Endothelial cell of umbilical vein (primary cell): ENCODE measurements at regions of chr1 and their contacts with region 1.

Region 1: GRCh38 chr1:119275145-119276134 is 93.1 kb upstream of the HAO2 start:
- DNase-seq: peak; percentile 63
- H3K4me3 ChIP-seq: no peak overlapping the region
- H3K27ac ChIP-seq: no peak overlapping the region
- H3K4me1 ChIP-seq: peaks cover 16% of the 10 kb centered on the region
- H3K27me3 ChIP-seq: peaks cover 9 to 18% of the 10 kb centered on the region in 2 experiments
- CTCF ChIP-seq: peak; percentile 84 to 87
- POLR2A ChIP-seq: no peak

Region 2: GRCh38 chr1:118788463-118788862 is 487.0 kb before region 1 on chr1:
- CTCF ChIA-PET with region 1: no interaction called
- POLR2A ChIA-PET with region 1: no interaction called
- dilution Hi-C with region 1: no loop called
- intact Hi-C with region 1: no loop called
- DNase-seq: no peak
- H3K4me3 ChIP-seq: no peak overlapping the region
- H3K27ac ChIP-seq: no peak overlapping the region
- H3K4me1 ChIP-seq: no peaks in the 10 kb centered on the region
- H3K27me3 ChIP-seq: no peaks in the 10 kb centered on the region
- CTCF ChIP-seq: no peak
- POLR2A ChIP-seq: no peak

Region 3: DNA sequence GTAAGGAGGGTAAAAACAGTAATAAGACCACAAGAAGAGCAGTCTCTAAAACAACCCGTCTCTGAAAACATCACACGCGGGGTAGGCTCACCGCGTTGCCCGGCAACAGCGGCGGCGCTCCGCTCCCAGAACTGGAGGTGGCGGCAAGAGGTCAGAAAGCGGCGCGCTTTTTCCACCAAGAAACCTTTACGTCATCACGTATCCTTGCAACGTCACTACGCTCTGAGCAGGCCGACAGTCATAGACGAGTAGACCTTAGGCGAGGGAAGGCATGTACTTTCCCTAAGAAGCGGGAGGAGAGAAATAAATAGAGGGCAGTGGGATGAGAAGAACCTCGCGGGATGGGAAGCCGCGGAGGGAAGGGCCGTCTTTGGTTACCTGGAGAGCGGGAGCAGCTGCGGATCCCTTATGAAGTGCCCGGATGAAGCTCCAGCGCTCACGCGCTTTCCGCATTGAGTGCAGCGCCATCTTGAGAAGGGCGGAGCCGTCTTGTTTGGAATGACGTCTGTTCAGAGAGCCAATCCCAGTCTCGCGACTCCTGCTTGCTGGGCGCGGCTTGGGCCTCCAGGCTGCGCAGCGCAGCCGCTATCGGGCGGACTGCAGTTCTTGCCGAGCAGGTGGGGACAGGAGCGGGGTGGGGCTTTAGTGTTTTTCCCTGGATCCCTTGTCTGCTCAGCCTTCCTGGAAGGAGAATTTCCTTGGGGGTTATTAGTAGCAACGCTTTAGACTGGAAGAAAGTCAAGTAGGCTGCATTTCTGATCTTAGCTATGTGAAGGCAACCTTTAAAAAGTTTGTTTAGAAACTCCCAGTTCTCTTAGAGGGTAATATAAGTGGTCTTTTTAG is 135.0 kb before region 1 on chr1 and contains the start of gene WARS2:
- CTCF ChIA-PET with region 1: interaction called, 7 read pairs
- POLR2A ChIA-PET with region 1: no interaction called
- dilution Hi-C with region 1: no loop called
- intact Hi-C with region 1: loop called (anchors 2 kb)
- DNase-seq: peak; percentile 97
- H3K4me3 ChIP-seq: peak within 1 kb of the TSS; percentile 14 to 71 (median 56)
- H3K27ac ChIP-seq: peak within 1 kb of the TSS; percentile 89
- H3K4me1 ChIP-seq: peaks cover 13% of the 10 kb centered on the region
- H3K27me3 ChIP-seq: no peaks in the 10 kb centered on the region
- CTCF ChIP-seq: no peak
- POLR2A ChIP-seq: peak; percentile 92
- total RNA-seq, gene WARS2: 11.8 and 13.1 TPM in 2 replicates

Region 4: GRCh38 chr1:119254067-119254720 is 21.2 kb before region 1 on chr1:
- CTCF ChIA-PET with region 1: interaction called, 10 read pairs
- POLR2A ChIA-PET with region 1: no interaction called
- dilution Hi-C with region 1: no loop called
- intact Hi-C with region 1: no loop called
- DNase-seq: no peak
- H3K4me3 ChIP-seq: no peak overlapping the region
- H3K27ac ChIP-seq: no peak overlapping the region
- H3K4me1 ChIP-seq: no peaks in the 10 kb centered on the region
- H3K27me3 ChIP-seq: no peaks in the 10 kb centered on the region
- CTCF ChIP-seq: no peak
- POLR2A ChIP-seq: no peak

Region 5: GRCh38 chr1:119298687-119299303 is 23.4 kb after region 1 on chr1:
- CTCF ChIA-PET with region 1: interaction called, 12 read pairs
- POLR2A ChIA-PET with region 1: no interaction called
- dilution Hi-C with region 1: no loop called
- intact Hi-C with region 1: no loop called
- DNase-seq: no peak
- H3K4me3 ChIP-seq: no peak overlapping the region
- H3K27ac ChIP-seq: no peak overlapping the region
- H3K4me1 ChIP-seq: no peaks in the 10 kb centered on the region
- H3K27me3 ChIP-seq: peaks cover 3 to 6% of the 10 kb centered on the region in 2 experiments
- CTCF ChIP-seq: no peak
- POLR2A ChIP-seq: no peak

Region 6: DNA sequence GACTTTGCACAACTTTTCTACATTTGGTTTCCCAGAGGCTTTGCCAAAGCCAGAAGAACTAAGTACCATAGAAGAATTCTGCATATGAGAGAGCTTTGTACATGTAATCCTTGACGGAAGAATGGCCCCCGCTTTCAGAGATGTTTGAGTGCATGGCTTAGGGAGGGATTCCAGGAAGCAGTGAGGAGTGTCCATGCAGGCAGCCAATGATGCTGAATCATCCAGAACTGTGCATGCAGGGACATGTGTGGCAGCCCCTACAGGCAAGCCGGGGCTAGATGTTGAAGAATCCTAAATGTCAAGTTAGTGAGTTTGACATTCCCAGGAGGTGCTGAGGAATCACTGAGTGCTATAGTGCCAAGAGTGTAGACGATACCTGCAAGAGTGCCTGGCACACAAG is 83.2 kb after region 1 on chr1:
- CTCF ChIA-PET with region 1: interaction called, 18 read pairs
- POLR2A ChIA-PET with region 1: no interaction called
- dilution Hi-C with region 1: no loop called
- intact Hi-C with region 1: no loop called
- DNase-seq: no peak
- H3K4me3 ChIP-seq: no peak overlapping the region
- H3K27ac ChIP-seq: no peak overlapping the region
- H3K4me1 ChIP-seq: no peaks in the 10 kb centered on the region
- H3K27me3 ChIP-seq: no peaks in the 10 kb centered on the region
- CTCF ChIP-seq: no peak
- POLR2A ChIP-seq: no peak

Region 7: DNA sequence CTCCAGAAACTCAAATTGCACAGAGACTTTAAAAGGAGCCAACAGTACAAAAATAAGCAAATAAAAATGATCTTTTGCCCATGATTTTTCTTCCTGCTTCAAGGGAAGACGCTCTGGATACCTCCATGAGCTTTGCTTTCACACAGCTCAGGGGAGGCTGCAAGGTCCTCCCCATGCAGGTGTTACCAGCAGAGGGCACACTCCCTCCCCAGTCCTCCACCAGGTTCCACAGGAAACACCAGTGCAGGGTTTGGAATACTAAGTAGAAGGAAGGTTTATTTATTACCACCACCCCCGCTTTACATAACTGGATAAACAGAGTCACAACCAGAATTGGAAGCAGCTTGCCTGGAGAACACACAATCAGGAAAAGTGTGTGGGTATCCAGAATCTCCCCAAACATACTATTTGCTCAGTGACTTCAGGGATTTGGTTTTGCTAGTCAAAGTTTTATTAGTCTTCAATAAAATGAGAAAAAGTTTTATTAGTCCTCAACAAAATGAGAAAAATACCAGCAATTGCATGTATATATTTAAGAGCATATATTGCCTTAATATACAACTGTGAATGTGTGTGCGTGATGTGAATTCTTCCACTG is 268.8 kb after region 1 on chr1:
- CTCF ChIA-PET with region 1: no interaction called
- POLR2A ChIA-PET with region 1: no interaction called
- dilution Hi-C with region 1: no loop called
- intact Hi-C with region 1: loop called (anchors 5 kb)
- DNase-seq: no peak
- H3K4me3 ChIP-seq: no peak overlapping the region
- H3K27ac ChIP-seq: no peak overlapping the region
- H3K4me1 ChIP-seq: no peaks in the 10 kb centered on the region
- H3K27me3 ChIP-seq: peaks cover 2 to 8% of the 10 kb centered on the region in 2 experiments
- CTCF ChIP-seq: peak; percentile 23 to 47
- POLR2A ChIP-seq: no peak